WTC11 (cell line): ENCODE measurements at regions of chr22 and their contacts with region 1.

Region 1: GRCh38 chr22:40055143-40055883 is 60.6 kb downstream of the FAM83F start:
- DNase-seq: no peak
- ATAC-seq: peak; percentile 13; the same call in 1 of the 2 replicates
- H3K4me3 Mint-ChIP-seq: no peak overlapping the region
- H3K27ac Mint-ChIP-seq: peak overlapping the region; percentile 59
- H3K4me1 Mint-ChIP-seq: peaks cover 51% of the 10 kb centered on the region
- H3K27me3 Mint-ChIP-seq: no peaks in the 10 kb centered on the region
- CTCF ChIP-seq: no peak

Region 2: DNA sequence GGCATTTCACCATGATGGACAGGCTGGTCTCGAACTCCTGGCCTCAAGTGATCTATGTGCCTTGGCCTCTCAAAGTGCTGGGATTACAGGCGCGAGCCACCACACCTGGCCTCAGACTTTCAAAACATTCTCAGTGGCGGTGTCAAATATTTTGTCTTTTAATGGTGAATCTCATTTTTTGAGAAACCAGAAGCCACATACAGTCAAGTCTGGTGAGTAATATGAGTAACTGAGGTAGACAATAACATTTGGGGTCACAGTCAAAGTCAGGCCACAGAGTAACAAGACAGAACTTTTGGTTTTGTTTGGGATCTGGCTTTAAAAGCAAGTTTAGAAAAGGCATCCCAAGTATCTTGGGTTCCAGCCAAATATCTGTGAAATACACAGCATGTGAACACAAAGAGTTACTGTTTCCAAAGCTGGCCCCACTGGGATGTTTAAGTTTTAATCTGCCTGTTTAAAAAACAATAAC is 100.7 kb before region 1 on chr22:
- CTCF ChIA-PET with region 1: no interaction called
- POLR2A ChIA-PET with region 1: no interaction called
- DNase-seq: no peak
- ATAC-seq: no peak
- H3K4me3 Mint-ChIP-seq: no peak overlapping the region
- H3K27ac Mint-ChIP-seq: no peak overlapping the region
- H3K4me1 Mint-ChIP-seq: peaks cover 42% of the 10 kb centered on the region
- H3K27me3 Mint-ChIP-seq: peaks cover under 1% of the 10 kb centered on the region; the same call in 1 of the 2 replicates
- CTCF ChIP-seq: no peak

Region 3: GRCh38 chr22:40044102-40044869 is 11.0 kb before region 1 on chr22:
- CTCF ChIA-PET with region 1: interaction called, 4 read pairs
- POLR2A ChIA-PET with region 1: interaction called, 11 read pairs
- DNase-seq: peak; percentile 98
- ATAC-seq: peak; percentile 91
- H3K4me3 Mint-ChIP-seq: peak overlapping the region; percentile 93
- H3K27ac Mint-ChIP-seq: peak overlapping the region; percentile 99
- H3K4me1 Mint-ChIP-seq: peaks cover 16% of the 10 kb centered on the region
- H3K27me3 Mint-ChIP-seq: peaks cover 17% of the 10 kb centered on the region
- CTCF ChIP-seq: no peak

Region 4: DNA sequence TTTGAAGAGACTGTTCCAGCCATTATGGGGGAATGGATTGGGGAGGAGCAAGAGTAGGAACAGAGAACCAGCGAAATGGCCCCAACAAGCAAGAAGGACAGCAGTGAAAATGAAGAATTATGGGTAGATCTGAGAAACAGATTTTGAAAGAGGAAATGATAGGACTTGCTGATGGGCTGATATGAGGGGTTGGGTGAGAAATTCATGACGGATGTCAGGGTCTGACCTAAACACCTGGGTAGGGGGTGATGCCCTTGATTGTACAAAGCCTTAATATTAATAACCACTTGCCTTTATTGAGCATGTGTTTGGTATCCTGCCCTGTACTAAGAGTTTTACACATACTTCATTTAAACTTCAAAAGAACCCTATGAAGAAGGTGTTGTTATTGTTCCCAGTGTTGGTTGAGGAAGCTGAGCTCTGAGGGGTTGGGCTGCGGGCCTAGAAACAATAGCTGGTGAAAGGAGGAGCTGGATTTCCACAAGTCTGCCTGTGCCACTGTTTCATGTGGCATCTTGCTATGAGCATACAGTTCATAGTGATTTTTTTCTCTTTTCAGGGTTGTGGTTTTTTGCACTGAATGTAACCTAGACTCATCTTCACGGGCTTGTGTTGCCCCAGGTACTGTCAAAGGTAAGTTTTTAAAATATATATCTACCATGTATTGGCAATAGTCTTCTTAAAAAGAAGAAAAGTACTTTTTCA is 61.3 kb after region 1 on chr22:
- CTCF ChIA-PET with region 1: no interaction called
- POLR2A ChIA-PET with region 1: no interaction called
- DNase-seq: no peak
- ATAC-seq: no peak
- H3K4me3 Mint-ChIP-seq: no peak overlapping the region
- H3K27ac Mint-ChIP-seq: no peak overlapping the region
- H3K4me1 Mint-ChIP-seq: peaks cover 7% of the 10 kb centered on the region
- H3K27me3 Mint-ChIP-seq: no peaks in the 10 kb centered on the region
- CTCF ChIP-seq: no peak

Region 5: DNA sequence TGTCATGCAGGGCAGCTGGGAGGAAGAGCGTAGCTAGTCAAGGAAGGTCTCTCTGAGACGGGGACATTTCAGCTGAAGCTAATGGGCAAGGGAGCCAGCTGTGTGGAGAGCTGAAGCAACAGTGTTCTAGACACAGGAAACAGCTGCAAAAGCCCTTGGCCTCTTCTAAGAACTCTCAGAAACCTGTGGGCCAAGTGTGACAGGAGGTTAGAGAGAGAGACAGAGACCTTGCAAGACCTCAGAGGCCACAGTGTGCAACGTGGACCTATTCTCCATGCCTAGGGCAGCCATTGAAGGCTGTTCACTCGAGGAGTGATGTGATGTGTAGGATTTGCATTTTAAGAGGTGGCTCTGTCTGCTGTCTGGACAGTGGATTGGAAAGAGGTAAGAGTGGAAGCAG is 73.7 kb after region 1 on chr22:
- CTCF ChIA-PET with region 1: no interaction called
- POLR2A ChIA-PET with region 1: interaction called, 10 read pairs
- DNase-seq: no peak
- ATAC-seq: no peak
- H3K4me3 Mint-ChIP-seq: no peak overlapping the region
- H3K27ac Mint-ChIP-seq: no peak overlapping the region
- H3K4me1 Mint-ChIP-seq: no peaks in the 10 kb centered on the region
- H3K27me3 Mint-ChIP-seq: no peaks in the 10 kb centered on the region
- CTCF ChIP-seq: no peak